ENCODE measurements at regions of chr4 and their contacts with region 1.

Region 1: DNA sequence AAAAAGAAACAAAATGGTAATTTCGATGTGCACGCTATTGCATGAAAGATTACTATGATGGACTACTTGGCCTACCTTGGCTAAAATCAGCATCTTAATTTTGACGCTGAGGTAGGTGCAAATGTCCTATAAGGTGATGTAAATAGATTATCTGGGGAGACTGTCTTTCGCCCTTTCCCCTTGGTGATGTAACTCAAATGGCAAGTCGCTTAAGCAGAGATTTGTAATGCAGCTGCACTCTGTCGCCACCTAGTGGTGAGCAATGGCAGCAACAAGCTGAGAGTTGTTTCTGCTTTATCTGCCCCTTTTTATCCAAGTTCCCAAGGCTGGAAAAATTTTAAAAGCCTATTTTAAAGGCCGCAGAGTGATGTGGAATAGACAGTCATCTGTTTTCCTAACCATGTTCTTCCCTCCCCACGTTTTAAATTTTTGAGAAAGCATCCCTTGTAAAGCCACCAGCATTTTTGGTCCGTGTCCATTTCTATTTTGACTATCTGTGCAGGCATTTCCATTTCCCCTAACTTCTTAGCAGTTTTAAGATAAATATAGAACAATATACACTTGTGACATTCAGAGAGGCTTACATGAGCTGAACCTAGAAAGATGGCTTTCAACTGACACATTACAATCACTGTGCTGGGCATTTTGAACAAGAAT is 62.4 kb upstream of the PDLIM3 start:
- DNase-seq: peak; percentile 69 to 81
- H3K4me3 ChIP-seq: no peak overlapping the region
- H3K27ac ChIP-seq: no peak overlapping the region
- H3K4me1 ChIP-seq: peaks cover 0 to 7% of the 10 kb centered on the region in 2 donors
- H3K27me3 ChIP-seq: no peaks in the 10 kb centered on the region
- CTCF ChIP-seq: peak; percentile 94 to 100 (median 98)
- POLR2A ChIP-seq: no peak

Region 2: GRCh38 chr4:185394568-185395237 is 203.0 kb before region 1 on chr4:
- intact Hi-C with region 1: no loop called
- DNase-seq: no peak
- H3K4me3 ChIP-seq: peak overlapping the region in 1 of 3 donors; percentile 79
- H3K27ac ChIP-seq: peak overlapping the region in 1 of 3 donors; percentile 99
- H3K4me1 ChIP-seq: peaks cover 12 to 15% of the 10 kb centered on the region in 2 donors
- H3K27me3 ChIP-seq: no peaks in the 10 kb centered on the region
- CTCF ChIP-seq: no peak
- POLR2A ChIP-seq: no peak

Region 3: DNA sequence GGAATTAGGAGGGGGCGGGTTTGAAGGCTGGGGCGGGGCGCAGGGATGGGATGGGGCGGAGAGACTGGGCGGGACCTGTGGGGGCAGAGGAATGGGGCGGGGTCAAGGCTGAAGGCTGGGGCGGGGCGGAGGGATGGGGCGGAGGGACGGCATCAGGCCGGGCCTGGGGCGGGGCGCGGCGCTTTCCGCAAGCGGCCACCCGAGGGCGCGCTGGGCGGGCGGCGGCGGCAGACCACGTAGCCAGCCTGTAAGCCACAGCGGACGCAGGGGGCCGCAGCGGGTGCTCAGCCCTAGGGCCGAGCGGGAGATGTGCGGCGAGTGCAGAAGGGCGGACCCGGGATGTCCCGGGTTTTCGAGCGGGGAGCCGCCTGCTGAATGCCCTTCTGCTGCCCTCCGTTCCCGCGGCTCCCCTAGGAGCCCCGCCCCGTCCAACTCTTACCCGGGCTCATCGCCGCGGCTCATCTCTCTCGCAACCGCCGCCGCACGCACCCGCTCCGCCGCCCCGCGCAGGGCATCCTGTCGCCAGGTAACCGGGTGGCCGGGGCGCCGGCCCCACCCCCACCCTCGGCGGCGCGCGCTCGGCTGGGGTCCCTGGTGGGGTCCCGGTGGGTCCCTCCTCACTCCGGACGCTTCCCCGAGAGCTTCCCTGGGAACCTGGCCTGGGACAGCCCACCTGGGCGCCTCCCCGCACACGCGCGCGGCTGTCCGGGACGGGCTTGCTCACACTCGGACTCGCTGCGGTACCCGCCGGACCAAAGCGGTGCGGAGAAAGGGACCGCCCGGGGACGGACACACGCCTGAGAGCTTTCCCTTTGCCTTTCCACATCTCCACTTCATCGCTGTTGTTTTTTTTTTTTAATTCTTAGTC is 126.2 kb before region 1 on chr4 and contains the start of gene CCDC110:
- intact Hi-C with region 1: loop called (anchors 5 kb)
- DNase-seq: peak; percentile 89 to 95
- H3K4me3 ChIP-seq: peak within 1 kb of the TSS; percentile 48 to 92 (median 65)
- H3K27ac ChIP-seq: peak within 1 kb of the TSS; percentile 58 to 79 (median 75)
- H3K4me1 ChIP-seq: peaks cover 6 to 12% of the 10 kb centered on the region in 2 donors
- H3K27me3 ChIP-seq: no peaks in the 10 kb centered on the region
- CTCF ChIP-seq: peak; percentile 28 to 91 (median 68)
- POLR2A ChIP-seq: peak in 1 of 2 donors; percentile 74
- total RNA-seq, gene CCDC110: 6.8 to 22.1 (median 10.4) TPM

Measured in thyroid gland (tissue), 4 donors.